ENCODE measurements at regions of chr3 and their contacts with region 1.

Region 1: DNA sequence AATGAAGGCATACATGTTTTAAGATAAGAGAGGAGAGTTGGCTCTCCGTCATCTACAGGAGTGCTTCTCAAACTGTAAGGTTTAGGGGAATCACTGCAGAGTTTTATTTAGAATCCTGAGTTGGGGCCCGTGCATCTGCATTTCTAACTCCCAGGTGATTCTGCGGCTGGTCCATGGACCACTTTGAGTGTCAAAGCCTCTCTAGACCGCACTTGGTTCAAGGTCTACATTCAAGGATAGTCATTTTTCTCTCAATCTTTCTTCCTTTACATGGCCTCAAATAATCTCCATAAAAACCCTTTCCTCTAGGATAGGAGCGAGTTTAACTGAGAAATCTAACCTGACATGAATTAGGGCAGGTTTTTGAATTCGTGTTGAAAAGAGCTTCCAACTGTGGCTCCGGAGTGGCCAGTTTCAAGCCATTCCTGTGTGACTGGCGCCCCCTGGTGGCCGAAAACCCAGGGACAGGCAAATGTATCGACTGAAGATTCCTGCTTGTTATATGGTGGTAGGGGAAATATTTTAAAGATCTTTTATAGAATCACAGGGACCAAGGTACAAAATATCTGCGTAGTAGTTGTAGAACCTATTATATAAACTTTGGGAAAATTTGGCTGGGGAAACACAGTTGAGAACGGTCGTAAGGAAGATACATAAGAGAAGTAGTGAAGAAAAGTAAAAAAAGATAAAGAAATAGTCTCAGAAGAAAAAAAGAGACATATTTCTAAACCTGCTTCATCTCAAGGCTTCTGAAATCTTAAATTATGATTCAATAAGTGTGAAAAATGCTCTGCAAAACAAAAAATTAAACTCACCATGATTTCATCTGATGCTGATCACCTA is 11.9 kb downstream of the GABRR3 start:
- DNase-seq: peak; percentile 88 to 91
- ATAC-seq: peak; percentile 71 to 93 (median 83)
- H3K4me3 ChIP-seq: no peak overlapping the region
- H3K27ac ChIP-seq: no peak overlapping the region
- H3K4me1 ChIP-seq: peaks cover 0 to 3% (median 0%) of the 10 kb centered on the region in 9 donors
- H3K27me3 ChIP-seq: peaks cover 0 to 5% (median 0%) of the 10 kb centered on the region in 7 donors
- CTCF ChIP-seq: peak; percentile 93 to 99 (median 96)

Region 2: GRCh38 chr3:97793420-97794019 is 229.7 kb before region 1 on chr3:
- intact Hi-C with region 1: loop called (anchors 1 to 5 kb)
- DNase-seq: peak in 1 of 2 donors; percentile 10
- ATAC-seq: peak in 1 of 8 donors; percentile 47
- H3K4me3 ChIP-seq: no peak overlapping the region
- H3K27ac ChIP-seq: no peak overlapping the region
- H3K4me1 ChIP-seq: no peaks in the 10 kb centered on the region
- H3K27me3 ChIP-seq: no peaks in the 10 kb centered on the region
- CTCF ChIP-seq: peak; percentile 72 to 92 (median 85)

Region 3: DNA sequence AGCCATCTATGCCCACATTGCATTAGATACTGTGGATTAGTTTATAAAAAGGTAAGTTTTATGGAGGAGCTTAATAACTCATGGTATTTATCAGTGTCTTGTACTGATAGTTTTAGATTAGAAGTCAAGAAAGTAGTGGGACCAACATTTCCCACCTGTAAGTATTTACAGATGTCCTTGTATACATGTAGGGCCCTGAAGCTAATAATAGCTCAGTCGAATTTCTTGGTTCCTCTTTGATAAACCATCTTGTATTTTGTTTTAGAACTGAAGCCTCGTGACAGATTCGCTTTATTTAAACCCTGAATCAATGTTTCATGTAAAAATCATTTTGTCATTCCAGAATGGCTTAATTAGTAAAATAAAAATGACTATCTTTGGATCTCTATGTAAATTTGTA is 128.0 kb before region 1 on chr3:
- intact Hi-C with region 1: loop called in 1 of 10 experiments (anchors 10 kb)
- DNase-seq: no peak
- ATAC-seq: no peak
- H3K4me3 ChIP-seq: no peak overlapping the region
- H3K27ac ChIP-seq: no peak overlapping the region
- H3K4me1 ChIP-seq: peaks cover 0 to 8% (median 0%) of the 10 kb centered on the region in 9 donors
- H3K27me3 ChIP-seq: no peaks in the 10 kb centered on the region
- CTCF ChIP-seq: no peak

Region 4: GRCh38 chr3:97971677-97972567 is 51.3 kb before region 1 on chr3 and contains the start of gene RIOX2:
- intact Hi-C with region 1: loop called in 4 of 10 experiments (anchors 5 to 10 kb)
- DNase-seq: peak; percentile 57 to 81
- ATAC-seq: peak; percentile 91 to 99 (median 95)
- H3K4me3 ChIP-seq: peak within 1 kb of the TSS; percentile 63 to 83 (median 76)
- H3K27ac ChIP-seq: peak within 1 kb of the TSS in 9 of 10 donors; percentile 73 to 88 (median 81)
- H3K4me1 ChIP-seq: peaks cover 0 to 33% (median 12%) of the 10 kb centered on the region in 9 donors
- H3K27me3 ChIP-seq: no peaks in the 10 kb centered on the region
- CTCF ChIP-seq: peak in 4 of 9 donors; percentile 25 to 36 (median 32)
- total RNA-seq, gene RIOX2: 9.1 to 15.8 (median 12.8) TPM

Region 5: GRCh38 chr3:97979610-97980009 is 43.6 kb before region 1 on chr3:
- intact Hi-C with region 1: loop called in 4 of 10 experiments (anchors 5 to 10 kb)
- DNase-seq: peak; percentile 25 to 50
- ATAC-seq: peak; percentile 60 to 97 (median 87)
- H3K4me3 ChIP-seq: no peak overlapping the region
- H3K27ac ChIP-seq: no peak overlapping the region
- H3K4me1 ChIP-seq: peaks cover 0 to 20% (median 5%) of the 10 kb centered on the region in 9 donors
- H3K27me3 ChIP-seq: no peaks in the 10 kb centered on the region
- CTCF ChIP-seq: peak in 1 of 9 donors; percentile 23